Tibial artery (tissue), 4 donors: ENCODE measurements at regions of chr6 and their contacts with region 1.

Region 1: GRCh38 chr6:34887753-34888513 is at the start of gene TAF11:
- DNase-seq: peak; percentile 96
- H3K4me3 ChIP-seq: peak within 1 kb of the TSS; percentile 75 to 95
- H3K27ac ChIP-seq: peak within 1 kb of the TSS; percentile 87 to 88
- H3K4me1 ChIP-seq: peaks cover 0 to 38% (median 19%) of the 10 kb centered on the region in 4 donors
- H3K27me3 ChIP-seq: no peaks in the 10 kb centered on the region
- CTCF ChIP-seq: no peak

Region 2: GRCh38 chr6:34757687-34758274 is 130.2 kb before region 1 on chr6:
- intact Hi-C with region 1: loop called (anchors 5 kb)
- DNase-seq: no peak
- H3K4me3 ChIP-seq: peak overlapping the region; percentile 51 to 66
- H3K27ac ChIP-seq: peak overlapping the region; percentile 75 to 91
- H3K4me1 ChIP-seq: peaks cover 0 to 11% (median 8%) of the 10 kb centered on the region in 4 donors
- H3K27me3 ChIP-seq: no peaks in the 10 kb centered on the region
- CTCF ChIP-seq: no peak

Region 3: DNA sequence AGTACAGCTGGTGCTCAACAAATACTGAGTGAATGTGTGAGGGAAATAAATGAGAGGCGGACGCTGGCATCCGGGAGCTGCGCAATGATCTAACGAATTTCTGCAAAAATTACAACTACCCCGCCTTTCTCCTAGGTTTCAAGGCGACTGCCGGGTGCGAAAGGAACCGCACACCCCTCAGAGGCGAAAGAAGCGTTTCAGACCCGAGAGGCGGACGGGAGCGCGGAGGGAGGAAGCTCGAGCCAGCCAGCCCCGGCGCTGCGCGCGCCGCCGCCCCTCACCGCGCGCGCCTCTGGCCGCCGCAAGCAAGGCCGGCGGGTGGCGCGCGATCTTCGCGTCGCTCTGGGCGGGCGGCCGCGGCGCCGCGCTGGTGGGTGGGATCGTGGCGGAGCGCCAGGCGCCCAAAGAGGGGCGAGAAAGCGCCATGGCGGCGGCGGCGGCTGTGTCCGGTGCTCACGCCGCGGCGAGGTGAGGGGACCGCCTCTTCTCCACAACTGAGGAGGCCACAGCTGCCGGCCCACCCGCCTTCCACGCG is 96.2 kb before region 1 on chr6 and contains the start of gene BLTP3A:
- intact Hi-C with region 1: loop called (anchors 5 kb)
- DNase-seq: peak; percentile 49 to 81
- H3K4me3 ChIP-seq: peak within 1 kb of the TSS; percentile 70 to 76
- H3K27ac ChIP-seq: peak within 1 kb of the TSS; percentile 87 to 88
- H3K4me1 ChIP-seq: peaks cover 0 to 17% (median 13%) of the 10 kb centered on the region in 4 donors
- H3K27me3 ChIP-seq: no peaks in the 10 kb centered on the region
- CTCF ChIP-seq: peak in 1 of 2 experiments; percentile 15